A549 (cell line): ENCODE measurements at regions of chr10 and their contacts with region 1.

Region 1: GRCh38 chr10:121900443-121901174 is 27.2 kb downstream of the ATE1 start:
- DNase-seq: peak; percentile 62 to 71
- ATAC-seq: peak; percentile 96 to 98
- H3K4me3 ChIP-seq: no peak overlapping the region
- H3K27ac ChIP-seq: 0 out of 6 replicates have a peak overlapping the region, but pooled peaks of 1 of the 2 experiments have one; percentile 2
- H3K4me1 ChIP-seq: peaks cover 5% of the 10 kb centered on the region; the same call in 1 of the 3 replicates
- CTCF ChIP-seq: peak; percentile 63
- EP300 ChIP-seq: no peak
- POLR2A ChIP-seq: no peak
- RAD21 ChIP-seq: peak; percentile 57 to 63

Region 2: DNA sequence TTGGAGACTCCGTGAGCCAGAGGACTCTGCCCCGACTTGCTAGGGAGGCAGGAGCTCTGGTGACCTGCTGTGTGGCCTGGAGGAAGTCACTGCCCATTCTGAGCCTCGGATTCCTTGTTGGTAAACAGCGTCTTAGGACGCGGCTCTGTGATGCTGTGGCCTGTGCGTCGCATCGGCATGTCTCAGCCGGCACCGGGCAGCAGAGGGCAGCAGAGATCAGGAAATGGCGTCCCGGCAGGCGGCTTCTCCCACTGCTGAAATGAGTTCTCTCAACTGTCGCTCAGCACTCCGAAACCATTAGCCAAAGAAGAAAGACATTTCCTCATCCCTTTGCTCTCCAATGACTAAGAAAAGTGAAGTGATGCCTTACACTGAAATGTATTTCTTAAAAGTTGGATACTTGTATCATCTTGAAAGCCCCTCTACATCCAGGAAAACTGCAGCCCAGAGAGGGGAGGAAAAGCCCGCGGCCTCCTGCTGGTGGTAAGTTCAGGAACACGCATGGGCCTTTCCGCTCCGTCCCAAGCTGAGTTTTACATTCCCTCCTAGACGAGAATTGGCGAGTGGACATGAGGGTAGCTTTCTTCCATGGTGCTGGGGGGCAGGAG is 957.7 kb before region 1 on chr10:
- CTCF ChIA-PET with region 1: interaction called, 17 read pairs
- POLR2A ChIA-PET with region 1: no interaction called
- DNase-seq: peak; percentile 71 to 78
- ATAC-seq: peak; percentile 95 to 98
- H3K4me3 ChIP-seq: no peak overlapping the region
- H3K27ac ChIP-seq: no peak overlapping the region
- H3K4me1 ChIP-seq: no peaks in the 10 kb centered on the region
- CTCF ChIP-seq: peak; percentile 90
- EP300 ChIP-seq: no peak
- POLR2A ChIP-seq: no peak
- RAD21 ChIP-seq: peak; percentile 96 to 97

Region 3: GRCh38 chr10:121823993-121824463 is 76.6 kb before region 1 on chr10:
- CTCF ChIA-PET with region 1: interaction called, 14 read pairs
- POLR2A ChIA-PET with region 1: no interaction called
- DNase-seq: peak; percentile 42 to 44
- ATAC-seq: peak; percentile 78 to 82
- H3K4me3 ChIP-seq: no peak overlapping the region
- H3K27ac ChIP-seq: no peak overlapping the region
- H3K4me1 ChIP-seq: no peaks in the 10 kb centered on the region; the same call in 2 of the 3 replicates
- CTCF ChIP-seq: peak; percentile 75
- EP300 ChIP-seq: no peak
- POLR2A ChIP-seq: no peak
- RAD21 ChIP-seq: peak; percentile 37 to 44; a peak in 4 of 5 replicates

Region 4: GRCh38 chr10:121831777-121832176 is 68.8 kb before region 1 on chr10:
- CTCF ChIA-PET with region 1: interaction called, 11 read pairs
- POLR2A ChIA-PET with region 1: no interaction called
- DNase-seq: no peak
- ATAC-seq: no peak
- H3K4me3 ChIP-seq: no peak overlapping the region
- H3K27ac ChIP-seq: no peak overlapping the region
- H3K4me1 ChIP-seq: peaks cover 4% of the 10 kb centered on the region; the same call in 1 of the 3 replicates
- CTCF ChIP-seq: no peak
- EP300 ChIP-seq: no peak
- POLR2A ChIP-seq: no peak
- RAD21 ChIP-seq: no peak

Region 5: DNA sequence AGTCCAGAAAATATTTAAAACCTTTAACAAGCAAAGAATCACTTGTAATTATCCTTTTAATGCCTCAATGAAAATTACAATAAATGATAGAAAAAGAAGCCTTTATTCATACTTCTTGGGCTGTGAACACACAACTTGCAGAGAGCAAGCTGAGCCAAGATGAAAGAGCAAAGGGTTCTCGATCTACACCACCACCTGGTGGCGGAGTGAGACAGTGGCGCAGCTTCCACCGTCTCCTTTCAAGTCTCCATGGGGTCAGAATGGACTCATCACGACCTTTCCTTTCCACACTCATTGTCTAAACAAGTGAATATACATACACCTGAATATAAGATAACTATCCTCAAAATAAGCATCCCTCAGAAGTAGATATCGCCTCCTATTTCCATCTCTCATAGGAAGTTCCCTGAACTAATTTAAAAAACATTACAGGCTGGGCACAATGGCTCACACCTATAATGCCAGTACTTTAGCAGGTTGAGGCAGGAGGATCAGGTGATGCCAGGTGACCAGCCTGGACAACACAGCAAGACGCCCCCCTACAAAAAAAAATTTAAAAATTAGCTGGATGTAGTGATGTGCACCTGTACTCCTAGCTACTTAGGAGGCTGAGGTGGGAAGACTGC is 13.5 kb before region 1 on chr10:
- CTCF ChIA-PET with region 1: interaction called, 56 read pairs
- POLR2A ChIA-PET with region 1: no interaction called
- DNase-seq: peak; percentile 78
- ATAC-seq: peak; percentile 97 to 98
- H3K4me3 ChIP-seq: no peak overlapping the region
- H3K27ac ChIP-seq: no peak overlapping the region
- H3K4me1 ChIP-seq: peaks cover 9% of the 10 kb centered on the region; the same call in 2 of the 3 replicates
- CTCF ChIP-seq: peak; percentile 78
- EP300 ChIP-seq: no peak
- POLR2A ChIP-seq: no peak
- RAD21 ChIP-seq: peak; percentile 68 to 75

Region 6: GRCh38 chr10:121919666-121920065 is 19.1 kb after region 1 on chr10:
- CTCF ChIA-PET with region 1: interaction called, 13 read pairs
- POLR2A ChIA-PET with region 1: no interaction called
- DNase-seq: no peak
- ATAC-seq: no peak
- H3K4me3 ChIP-seq: no peak overlapping the region
- H3K27ac ChIP-seq: no peak overlapping the region
- H3K4me1 ChIP-seq: peaks cover 7% of the 10 kb centered on the region; the same call in 2 of the 3 replicates
- CTCF ChIP-seq: no peak
- EP300 ChIP-seq: no peak
- POLR2A ChIP-seq: no peak
- RAD21 ChIP-seq: no peak